ENCODE measurements at regions of chr4 and their contacts with region 1.

Region 1: GRCh38 chr4:70239884-70240591 is 2.4 kb upstream of the CSN3 start:
- DNase-seq: no peak

Region 2: GRCh38 chr4:69936566-69936965 is 303.5 kb before region 1 on chr4:
- intact Hi-C with region 1: no loop called
- DNase-seq: no peak

Region 3: DNA sequence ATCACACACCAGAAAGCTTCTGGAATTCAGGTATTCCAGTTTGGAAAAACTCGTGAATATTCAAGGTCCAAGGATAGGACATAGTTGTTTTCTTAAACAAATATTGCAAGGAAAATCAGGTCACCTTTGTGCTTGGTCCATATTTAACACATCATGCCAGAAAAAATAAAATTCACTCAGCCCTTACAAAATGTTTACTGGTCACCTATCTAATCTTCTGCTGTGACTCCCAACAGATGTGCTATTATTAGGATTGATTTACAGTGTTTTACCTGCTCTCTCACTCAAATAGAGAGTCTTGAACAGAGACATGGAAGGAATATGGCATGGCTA is 11.9 kb after region 1 on chr4:
- intact Hi-C with region 1: loop called in 1 of 2 experiments (anchors 1 kb)
- DNase-seq: no peak

Region 4: GRCh38 chr4:70721747-70722146 is 481.7 kb after region 1 on chr4 and contains the start of gene RUFY3:
- intact Hi-C with region 1: no loop called
- DNase-seq: no peak
- total RNA-seq, gene RUFY3: 58.5 to 62.3 TPM

Region 5: DNA sequence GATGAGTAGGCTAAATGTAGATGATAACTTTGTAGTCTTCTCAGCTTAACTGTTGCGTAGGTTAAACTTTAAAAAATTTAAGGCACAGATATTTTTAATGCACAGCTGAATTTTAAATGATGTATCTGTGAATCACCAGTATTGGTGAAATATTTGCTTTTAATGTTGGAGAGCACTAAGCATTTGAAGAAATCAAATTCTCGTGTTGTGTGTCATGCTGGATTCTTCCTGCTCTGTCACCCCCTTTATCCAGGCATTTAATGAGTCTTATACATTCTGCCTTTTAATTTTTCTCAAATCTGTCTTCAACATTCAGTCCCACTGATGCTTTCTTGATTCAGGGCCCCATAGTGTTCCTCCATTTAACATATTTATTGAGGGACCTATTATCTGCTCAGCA is 1175.5 kb after region 1 on chr4:
- intact Hi-C with region 1: loop called in 1 of 2 experiments (anchors 10 kb)
- DNase-seq: no peak

Measured in posterior vena cava (tissue), 2 donors.